ENCODE measurements at regions of chr15 and their contacts with region 1.

Region 1: GRCh38 chr15:94230956-94231722 is at the start of gene MCTP2:
- DNase-seq: peak; percentile 93
- H3K4me3 ChIP-seq: peak within 1 kb of the TSS; percentile 34 to 81 (median 67)
- H3K27ac ChIP-seq: peak within 1 kb of the TSS; percentile 88 to 94 (median 90)
- H3K4me1 ChIP-seq: peaks cover 0 to 51% (median 25%) of the 10 kb centered on the region in 4 donors
- H3K27me3 ChIP-seq: no peaks in the 10 kb centered on the region
- CTCF ChIP-seq: peak in 3 of 5 experiments; percentile 5 to 27 (median 17)
- EP300 ChIP-seq: no peak
- POLR2A ChIP-seq: peak; percentile 81
- total RNA-seq, gene MCTP2: 108 to 409 (median 144) TPM

Region 2: DNA sequence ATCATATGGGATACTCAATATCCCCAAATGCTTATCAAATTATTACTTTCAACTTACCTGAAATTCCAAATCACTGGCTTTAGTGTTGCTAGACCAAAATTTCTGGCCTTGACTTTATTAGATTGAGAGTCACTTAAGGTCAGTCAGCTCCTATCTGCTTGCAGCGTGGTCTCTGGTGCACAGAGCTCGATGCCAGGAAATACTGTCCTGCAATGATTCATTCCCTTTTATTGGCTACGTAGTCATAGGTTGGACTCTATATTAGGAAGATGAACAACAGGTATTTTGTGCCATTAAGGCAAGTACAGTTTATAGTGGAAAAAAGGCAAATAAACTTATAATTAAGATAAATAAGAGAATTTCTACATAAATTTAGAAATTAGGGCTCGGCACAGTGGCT is 378.4 kb before region 1 on chr15:
- in situ Hi-C with region 1: no loop called
- intact Hi-C with region 1: no loop called
- DNase-seq: no peak
- H3K4me3 ChIP-seq: no peak overlapping the region
- H3K27ac ChIP-seq: no peak overlapping the region
- H3K4me1 ChIP-seq: no peaks in the 10 kb centered on the region
- H3K27me3 ChIP-seq: no peaks in the 10 kb centered on the region
- CTCF ChIP-seq: no peak
- EP300 ChIP-seq: no peak
- POLR2A ChIP-seq: no peak

Region 3: GRCh38 chr15:94193906-94194305 is 37.2 kb before region 1 on chr15:
- in situ Hi-C with region 1: no loop called
- intact Hi-C with region 1: loop called (anchors 1 kb)
- DNase-seq: no peak
- H3K4me3 ChIP-seq: no peak overlapping the region
- H3K27ac ChIP-seq: no peak overlapping the region
- H3K4me1 ChIP-seq: no peaks in the 10 kb centered on the region
- H3K27me3 ChIP-seq: no peaks in the 10 kb centered on the region
- CTCF ChIP-seq: no peak
- EP300 ChIP-seq: no peak
- POLR2A ChIP-seq: no peak

Measured in transverse colon (tissue), 4 donors.